ENCODE measurements at regions of chr13 and their contacts with region 1.

Region 1: DNA sequence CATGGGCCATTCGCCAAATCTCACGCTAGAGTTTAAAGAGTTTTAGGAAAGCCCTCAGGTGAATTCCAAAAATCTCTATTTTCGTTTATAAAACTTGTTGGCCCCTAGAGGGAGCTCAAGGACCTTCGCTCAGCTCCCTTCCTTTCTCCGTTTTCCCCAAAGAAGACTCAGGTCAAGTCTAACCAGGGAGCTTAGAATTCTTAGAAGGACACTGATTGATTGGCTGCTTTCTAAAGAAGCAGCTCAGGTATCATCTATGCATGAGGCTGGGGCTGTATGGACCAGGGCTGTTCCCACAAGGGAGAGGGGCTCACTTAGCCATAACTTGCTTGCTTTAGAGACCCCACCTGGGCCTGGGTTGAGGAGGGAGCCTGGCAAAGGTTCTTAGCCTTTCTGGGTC is 20.5 kb downstream of the DZIP1 start:
- DNase-seq: peak; percentile 39
- CTCF ChIP-seq: peak; percentile 42

Region 2: DNA sequence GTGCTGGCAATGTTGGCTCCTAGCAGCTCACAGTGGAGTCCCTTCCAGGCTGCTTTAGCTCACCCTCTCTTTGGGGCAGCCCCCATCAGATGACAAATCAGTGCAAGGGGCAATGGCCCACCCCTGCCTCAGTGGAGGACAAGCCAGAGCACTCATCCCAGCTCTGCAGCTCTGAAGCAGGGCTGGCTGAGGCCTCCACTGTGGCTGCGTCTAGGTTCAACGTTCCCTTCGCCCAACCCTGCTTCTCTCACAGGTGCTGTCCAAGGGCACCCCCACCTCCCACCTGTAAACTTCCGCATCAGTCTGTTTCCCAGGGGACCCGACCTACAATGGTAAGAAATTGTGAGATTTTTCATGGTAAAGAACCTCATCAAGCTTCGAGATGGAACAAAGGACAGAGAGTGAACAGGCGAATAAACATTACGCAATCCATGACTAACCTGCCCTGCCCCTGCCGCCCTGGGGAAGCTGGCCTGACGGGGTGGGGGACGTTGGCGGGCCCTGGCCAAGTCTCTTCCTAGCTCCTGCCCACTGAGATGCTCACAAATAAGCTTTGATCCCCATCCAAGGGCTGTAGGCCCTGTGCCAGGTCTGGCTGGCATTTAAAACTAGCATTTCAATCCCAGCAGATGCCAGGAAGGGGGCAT is 20.0 kb before region 1 on chr13:
- CTCF ChIA-PET with region 1: interaction called, 13 read pairs
- POLR2A ChIA-PET with region 1: no interaction called
- DNase-seq: no peak
- CTCF ChIP-seq: no peak

Region 3: DNA sequence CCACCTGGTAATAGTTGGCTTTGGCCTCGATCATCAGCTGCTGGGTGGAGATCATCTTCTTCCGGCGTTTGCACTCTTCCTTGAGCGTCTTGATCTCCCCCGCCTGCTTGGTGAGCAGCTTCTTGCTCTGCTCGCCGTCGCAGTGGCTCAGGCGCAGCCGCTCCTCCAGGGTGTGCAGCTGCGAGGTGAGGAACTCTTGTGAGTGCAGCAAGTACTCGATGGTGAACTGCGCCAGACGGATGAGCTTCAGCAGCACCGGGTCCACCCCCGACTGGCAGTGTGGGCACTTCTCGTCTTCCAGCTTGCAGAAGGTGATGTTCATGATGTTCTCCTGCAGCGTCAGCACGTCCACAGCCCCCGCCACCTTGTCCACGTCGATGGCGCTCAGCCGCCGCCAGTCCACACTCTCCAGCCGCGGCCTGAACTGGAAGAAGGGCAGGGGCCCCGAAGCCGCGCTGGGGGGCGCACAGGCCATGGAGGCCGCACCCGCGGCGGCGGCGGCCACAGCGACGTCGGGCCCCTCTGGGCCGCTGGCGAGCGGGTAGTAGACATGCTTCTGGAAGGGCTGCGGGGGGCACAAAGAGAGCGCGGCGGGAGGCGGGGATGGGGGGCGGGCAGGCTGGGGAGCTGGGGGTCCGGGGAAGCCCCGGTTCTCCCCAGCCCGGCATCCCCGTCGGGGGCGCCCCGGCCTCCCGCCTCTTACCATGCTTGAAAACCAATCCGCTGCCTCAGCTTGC is 17.4 kb after region 1 on chr13:
- CTCF ChIA-PET with region 1: interaction called, 11 read pairs
- POLR2A ChIA-PET with region 1: no interaction called
- DNase-seq: no peak
- CTCF ChIP-seq: no peak

Region 4: DNA sequence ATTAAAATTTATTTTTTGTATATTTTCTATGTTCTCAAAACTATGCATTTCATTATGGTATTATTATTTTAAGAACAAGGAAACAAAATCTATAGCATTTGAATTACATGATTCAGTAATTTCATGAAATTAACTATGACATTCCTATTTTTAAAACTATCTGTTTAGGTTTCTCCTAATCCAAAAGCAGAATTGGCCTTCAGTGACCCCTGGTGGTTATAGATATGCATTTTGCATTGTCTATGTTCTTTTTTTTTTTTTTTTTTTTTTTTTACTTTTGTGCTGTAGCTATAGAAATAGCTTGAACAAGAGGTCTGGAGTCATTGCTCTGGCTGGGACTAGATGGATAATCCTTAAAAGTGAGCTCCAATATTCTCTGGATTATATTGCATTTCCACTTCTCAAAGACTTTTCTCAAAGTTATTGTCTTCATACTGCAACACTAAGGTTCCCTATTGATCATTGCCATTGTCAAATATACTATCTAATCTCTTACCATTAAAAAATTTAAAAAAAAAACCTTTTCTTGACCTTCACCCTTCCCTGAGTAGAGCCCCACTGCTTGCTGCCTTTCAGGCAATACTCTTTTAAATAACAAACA is 37.1 kb after region 1 on chr13:
- CTCF ChIA-PET with region 1: interaction called, 20 read pairs
- POLR2A ChIA-PET with region 1: no interaction called
- DNase-seq: peak; percentile 27
- CTCF ChIP-seq: peak; percentile 49

Region 5: DNA sequence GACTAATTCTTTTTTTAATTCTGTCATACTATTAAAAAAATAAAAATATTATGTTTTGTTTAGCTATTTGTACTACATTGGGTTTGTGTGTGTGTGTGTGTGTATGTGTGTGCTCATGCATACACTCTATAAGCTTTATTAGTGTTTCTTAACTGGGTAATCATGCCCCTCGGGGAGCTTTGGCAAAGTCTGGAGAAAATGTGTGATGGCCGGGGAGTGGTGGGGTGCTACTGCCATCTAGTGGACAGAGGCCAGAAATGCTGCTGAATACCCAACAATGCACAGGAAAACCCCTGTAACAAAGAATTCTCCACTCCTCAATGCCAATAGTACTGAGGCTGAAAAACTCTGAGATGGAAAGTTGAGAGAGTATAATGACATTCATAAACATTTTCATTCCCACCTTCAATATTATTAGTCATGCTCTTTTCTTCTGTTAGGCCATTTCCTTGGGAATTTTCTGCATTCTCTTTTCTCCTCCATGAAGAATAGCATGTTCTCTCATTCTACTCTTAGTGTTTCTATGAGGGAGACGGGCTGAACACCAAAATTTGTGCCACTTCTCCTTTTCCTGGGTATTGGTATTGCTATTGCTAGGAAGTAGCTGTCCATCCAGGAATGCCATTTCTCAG is 210.2 kb after region 1 on chr13:
- CTCF ChIA-PET with region 1: interaction called, 172 read pairs
- POLR2A ChIA-PET with region 1: no interaction called
- DNase-seq: peak; percentile 60
- CTCF ChIP-seq: peak; percentile 85